ENCODE measurements at regions of chr14 and their contacts with region 1.

Region 1: GRCh38 chr14:102279688-102280348 is 25.1 kb downstream of the MOK start:
- DNase-seq: peak; percentile 94 to 100
- H3K4me3 ChIP-seq: peak overlapping the region; percentile 26; the same call in 1 of the 2 replicates
- H3K27ac ChIP-seq: peak overlapping the region; percentile 95
- H3K4me1 ChIP-seq: peaks cover 82% of the 10 kb centered on the region
- H3K27me3 ChIP-seq: no peaks in the 10 kb centered on the region
- CTCF ChIP-seq: no peak

Region 2: DNA sequence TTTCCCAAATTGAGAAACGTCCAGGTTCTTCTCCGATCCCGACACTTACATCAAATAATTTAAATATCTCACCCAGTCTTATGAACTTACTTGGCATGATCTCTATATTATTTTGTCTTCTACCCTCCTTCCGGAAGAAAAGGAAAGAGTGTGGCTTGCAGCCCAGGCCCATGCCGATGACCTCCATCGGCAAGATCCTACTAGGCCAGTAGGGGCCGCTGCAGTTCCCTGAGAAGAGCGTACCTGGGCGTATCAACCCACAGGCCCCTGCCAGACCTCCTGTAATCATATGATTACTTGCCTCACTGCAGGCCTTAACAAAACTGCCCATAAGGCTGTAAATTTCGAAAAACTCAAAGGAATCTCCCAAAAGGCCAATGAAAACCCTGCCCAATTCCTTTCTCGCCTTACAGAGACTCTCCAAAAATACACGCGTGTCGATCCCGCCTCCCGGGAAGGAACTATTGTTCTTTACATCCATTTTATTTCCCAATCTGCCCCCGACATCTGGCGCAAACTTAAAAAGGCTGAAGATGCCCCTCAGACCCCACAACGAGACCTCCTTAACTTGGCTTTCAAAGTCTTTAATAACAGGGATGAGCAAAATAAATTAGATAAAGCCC is 44.4 kb before region 1 on chr14:
- CTCF ChIA-PET with region 1: no interaction called
- POLR2A ChIA-PET with region 1: no interaction called
- intact Hi-C with region 1: loop called (anchors 1 kb)
- DNase-seq: peak; percentile 76 to 92
- H3K4me3 ChIP-seq: no peak overlapping the region
- H3K27ac ChIP-seq: peak overlapping the region; percentile 7; the same call in 1 of the 2 replicates
- H3K4me1 ChIP-seq: peaks cover 4% of the 10 kb centered on the region
- H3K27me3 ChIP-seq: no peaks in the 10 kb centered on the region
- CTCF ChIP-seq: peak; percentile 99

Region 3: GRCh38 chr14:102262929-102263462 is 16.8 kb before region 1 on chr14:
- CTCF ChIA-PET with region 1: no interaction called
- POLR2A ChIA-PET with region 1: no interaction called
- intact Hi-C with region 1: loop called (anchors 2 kb)
- DNase-seq: peak; percentile 36 to 84
- H3K4me3 ChIP-seq: no peak overlapping the region
- H3K27ac ChIP-seq: peak overlapping the region; percentile 20
- H3K4me1 ChIP-seq: peaks cover 17% of the 10 kb centered on the region
- H3K27me3 ChIP-seq: no peaks in the 10 kb centered on the region
- CTCF ChIP-seq: no peak

Measured in PC-9 (cell line).